ENCODE measurements at regions of chr6 and their contacts with region 1.

Region 1: DNA sequence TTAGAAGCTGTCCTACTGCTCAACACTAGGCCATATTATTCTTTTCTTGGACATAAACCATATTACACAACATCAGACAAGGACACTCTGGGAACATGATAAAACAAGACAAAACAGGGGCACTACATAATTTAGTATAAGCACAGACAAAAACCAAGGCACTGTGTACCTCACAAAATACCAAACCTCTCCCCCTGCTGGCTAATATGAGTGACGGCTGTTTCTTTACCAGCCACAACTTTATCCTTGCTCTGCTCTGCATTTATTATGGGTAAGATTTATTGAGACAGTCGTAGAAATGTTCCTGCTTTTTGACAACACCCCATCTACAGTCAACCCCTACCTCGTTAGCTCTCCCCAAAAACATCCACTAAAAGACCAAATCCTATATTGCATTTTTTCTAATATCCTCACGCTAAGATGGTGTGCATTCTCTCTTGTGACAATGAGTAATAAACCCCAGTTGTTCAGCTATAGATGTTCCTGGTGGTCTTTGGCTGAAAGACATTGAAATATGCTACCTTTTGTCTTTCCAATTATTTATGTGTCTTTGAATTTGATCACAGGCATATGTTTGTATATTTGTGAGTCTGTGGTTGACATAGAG is 23.8 kb upstream of the POLR1H start:
- DNase-seq: no peak
- ATAC-seq: peak; percentile 93
- H3K4me3 ChIP-seq: no peak overlapping the region
- H3K27ac ChIP-seq: no peak overlapping the region
- H3K4me1 ChIP-seq: no peaks in the 10 kb centered on the region
- H3K27me3 ChIP-seq: no peaks in the 10 kb centered on the region
- CTCF ChIP-seq: peak; percentile 40 to 71 (median 63); a peak in 5 of 6 replicates
- POLR2A ChIP-seq: no peak
- RAD21 ChIP-seq: peak; percentile 36

Region 2: DNA sequence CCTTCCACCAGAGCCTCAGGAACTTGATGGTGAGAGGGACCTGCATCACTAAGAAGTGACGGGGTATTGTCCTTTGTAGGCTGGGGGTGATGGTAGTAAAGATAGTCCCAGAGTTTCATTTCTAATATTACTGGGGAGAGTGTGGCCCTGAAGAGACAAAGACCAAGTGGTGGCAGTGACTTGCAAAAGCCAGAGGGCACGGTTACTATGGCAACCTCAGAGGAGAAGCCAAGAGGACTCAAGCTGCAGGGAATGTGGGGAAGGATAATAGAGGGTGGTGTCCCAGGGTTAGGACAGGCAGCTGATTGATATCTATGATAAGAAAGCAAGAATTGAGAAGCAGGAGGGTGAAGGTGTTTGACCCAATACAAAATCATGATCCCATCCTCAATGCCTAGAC is 167.2 kb before region 1 on chr6:
- CTCF ChIA-PET with region 1: no interaction called
- POLR2A ChIA-PET with region 1: no interaction called
- RAD21 ChIA-PET with region 1: no interaction called
- intact Hi-C with region 1: no loop called
- DNase-seq: no peak
- ATAC-seq: no peak
- H3K4me3 ChIP-seq: no peak overlapping the region
- H3K27ac ChIP-seq: no peak overlapping the region
- H3K4me1 ChIP-seq: no peaks in the 10 kb centered on the region
- H3K27me3 ChIP-seq: no peaks in the 10 kb centered on the region
- CTCF ChIP-seq: no peak
- POLR2A ChIP-seq: no peak
- RAD21 ChIP-seq: no peak

Region 3: GRCh38 chr6:30169658-30170614 is 132.7 kb after region 1 on chr6:
- CTCF ChIA-PET with region 1: no interaction called
- POLR2A ChIA-PET with region 1: no interaction called
- RAD21 ChIA-PET with region 1: no interaction called
- intact Hi-C with region 1: loop called (anchors 10 kb)
- DNase-seq: peak; percentile 51
- ATAC-seq: peak; percentile 99
- H3K4me3 ChIP-seq: no peak overlapping the region
- H3K27ac ChIP-seq: no peak overlapping the region
- H3K4me1 ChIP-seq: no peaks in the 10 kb centered on the region
- H3K27me3 ChIP-seq: no peaks in the 10 kb centered on the region
- CTCF ChIP-seq: peak; percentile 83 to 89 (median 88)
- POLR2A ChIP-seq: no peak
- RAD21 ChIP-seq: peak; percentile 93